ENCODE measurements at regions of chr7 and their contacts with region 1.

Region 1: DNA sequence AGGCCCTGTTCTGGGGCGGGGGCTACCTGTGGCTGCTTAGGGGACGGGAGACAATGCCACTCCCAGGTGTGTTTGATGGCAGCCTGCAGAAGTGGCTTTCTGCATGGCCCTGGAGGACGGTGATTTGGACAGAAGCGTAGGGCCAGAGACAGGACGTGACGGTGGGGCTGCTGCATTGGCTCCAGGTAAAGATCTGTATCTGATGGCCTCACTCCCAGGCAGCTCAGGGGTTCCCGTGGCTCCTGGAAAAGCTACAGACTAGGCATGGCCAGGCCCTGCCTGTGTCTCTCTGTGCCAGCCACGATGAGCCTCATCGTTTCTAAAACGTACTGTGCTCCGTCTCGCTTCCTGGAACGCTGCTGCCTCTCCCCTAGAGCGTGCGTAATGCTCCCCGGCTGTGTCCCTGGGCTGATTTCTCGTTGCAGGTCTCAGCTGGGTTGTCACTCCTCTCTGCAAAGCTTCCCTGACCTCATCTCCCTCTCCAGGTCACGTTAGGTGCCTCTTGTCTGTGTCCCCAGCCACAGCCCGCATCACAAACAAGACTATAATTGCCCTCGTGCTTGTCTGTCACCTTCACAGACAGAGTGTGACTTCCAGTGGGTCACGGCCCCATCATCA is 12.6 kb downstream of the GTF2IRD1 start:
- DNase-seq: peak; percentile 56
- H3K4me3 ChIP-seq: peak overlapping the region; percentile 28
- H3K27ac ChIP-seq: peak overlapping the region; percentile 36
- H3K4me1 ChIP-seq: peaks cover 47% of the 10 kb centered on the region
- CTCF ChIP-seq: no peak

Region 2: DNA sequence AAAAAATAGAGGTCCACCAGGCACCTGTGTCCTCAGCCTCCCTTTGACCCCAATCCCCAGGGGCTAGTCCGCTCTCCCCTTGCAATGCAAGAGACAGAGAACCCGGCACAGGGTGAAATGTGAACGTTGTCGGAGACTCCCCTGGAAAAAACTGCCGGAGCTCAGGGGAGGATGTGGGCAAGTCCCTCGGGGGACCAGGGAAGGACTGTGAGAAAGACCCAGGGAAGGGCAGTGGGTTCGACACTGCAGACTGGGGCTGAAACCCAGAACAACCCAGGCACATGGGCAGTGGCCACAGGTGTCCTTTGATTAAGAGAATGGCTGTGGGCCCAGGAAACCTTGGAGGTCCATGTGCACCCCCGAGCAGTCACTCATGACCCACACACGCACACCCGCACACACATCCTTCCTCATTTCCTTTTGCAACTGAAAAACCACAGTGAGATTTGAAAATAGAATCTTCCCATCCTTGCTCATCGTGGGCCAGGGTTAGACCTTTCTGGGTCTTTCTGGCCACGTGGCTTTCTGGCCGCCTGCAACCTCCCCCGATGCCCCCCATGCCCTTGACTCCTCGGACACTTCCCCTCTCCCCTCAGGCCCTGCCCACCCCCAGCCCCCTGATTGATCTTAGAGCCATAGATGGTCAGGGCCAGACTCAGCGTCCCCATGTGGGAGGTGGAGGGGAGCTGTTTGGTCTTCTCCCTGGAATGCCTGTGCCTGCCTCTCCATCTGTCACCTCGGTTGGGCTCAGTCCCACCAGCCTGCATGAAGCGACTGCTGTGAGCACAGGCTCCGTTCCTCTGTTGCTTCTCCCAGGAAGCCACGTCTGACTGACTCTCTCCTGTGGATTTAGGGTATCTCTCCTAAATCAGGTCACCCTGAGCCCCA is 248.6 kb before region 1 on chr7:
- CTCF ChIA-PET with region 1: interaction called, 3 read pairs
- POLR2A ChIA-PET with region 1: no interaction called
- intact Hi-C with region 1: loop called (anchors 10 kb)
- DNase-seq: peak; percentile 68
- H3K4me3 ChIP-seq: peak overlapping the region; percentile 4
- H3K27ac ChIP-seq: peak overlapping the region; percentile 66
- H3K4me1 ChIP-seq: peaks cover 58% of the 10 kb centered on the region
- CTCF ChIP-seq: no peak

Region 3: GRCh38 chr7:74525880-74526279 is 59.6 kb after region 1 on chr7:
- CTCF ChIA-PET with region 1: no interaction called
- POLR2A ChIA-PET with region 1: no interaction called
- intact Hi-C with region 1: no loop called
- DNase-seq: peak; percentile 13
- H3K4me3 ChIP-seq: no peak overlapping the region
- H3K27ac ChIP-seq: no peak overlapping the region
- H3K4me1 ChIP-seq: peaks cover 3% of the 10 kb centered on the region
- CTCF ChIP-seq: no peak

Region 4: GRCh38 chr7:74656837-74657691 is 190.8 kb after region 1 on chr7:
- CTCF ChIA-PET with region 1: no interaction called
- POLR2A ChIA-PET with region 1: no interaction called
- intact Hi-C with region 1: loop called (anchors 5 kb)
- DNase-seq: peak; percentile 99
- H3K4me3 ChIP-seq: peak overlapping the region; percentile 98
- H3K27ac ChIP-seq: peak overlapping the region; percentile 98
- H3K4me1 ChIP-seq: peaks cover 53% of the 10 kb centered on the region
- CTCF ChIP-seq: no peak